Activated naive CD4-positive, alpha-beta T cell treated with anti-CD3 and anti-CD28 coated beads for 36 hours (primary cell): ENCODE measurements at regions of chr2 and their contacts with region 1.

Region 1: GRCh38 chr2:61176755-61177726 is 15.1 kb downstream of the C2orf74 start:
- DNase-seq: peak; percentile 94
- H3K4me3 Mint-ChIP-seq: peak overlapping the region; percentile 78
- H3K27ac Mint-ChIP-seq: peak overlapping the region; percentile 79
- H3K4me1 Mint-ChIP-seq: peaks cover 48% of the 10 kb centered on the region
- H3K27me3 Mint-ChIP-seq: no peaks in the 10 kb centered on the region

Region 2: DNA sequence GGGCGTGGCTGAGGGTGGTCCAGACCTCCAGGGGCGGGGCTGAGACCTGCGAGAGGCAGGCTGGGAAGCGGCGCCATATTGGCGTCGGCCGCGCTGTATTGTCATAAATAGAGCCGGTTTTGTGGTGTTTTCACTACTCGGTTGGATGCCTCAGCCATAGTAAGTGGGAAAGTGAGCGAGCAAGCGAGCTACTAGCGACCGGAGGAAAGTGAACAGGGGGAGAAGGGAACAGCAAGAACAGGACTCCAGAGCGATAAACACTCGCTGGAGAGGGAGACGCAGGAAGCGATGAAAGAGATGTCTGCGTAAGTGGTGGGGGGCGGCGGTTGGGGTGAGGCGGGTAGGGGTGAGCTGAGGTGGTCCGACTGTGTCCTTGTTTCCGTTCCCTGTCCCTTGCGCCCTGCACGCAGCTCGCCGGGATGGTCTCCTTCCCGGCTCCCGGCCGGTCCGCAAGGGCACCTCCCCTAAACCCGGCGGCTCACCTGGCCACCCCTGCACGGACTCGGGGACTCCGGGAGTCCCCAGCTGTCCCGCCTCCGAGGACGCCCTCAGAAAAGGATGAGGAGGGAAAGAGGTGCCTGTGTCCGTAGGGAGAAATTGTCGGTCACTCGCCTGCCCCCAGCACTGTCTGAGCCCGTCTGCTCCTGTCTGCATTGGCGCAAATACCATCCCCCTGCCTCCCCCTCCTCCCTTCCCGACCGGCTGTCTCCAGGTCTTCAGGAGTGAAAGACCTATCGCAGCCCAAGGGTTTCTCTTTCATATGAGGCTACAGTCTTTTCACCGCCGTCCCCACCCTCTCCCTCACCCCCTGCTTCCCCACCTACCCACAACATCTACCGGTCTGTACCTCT is 420.6 kb before region 1 on chr2 and contains the start of gene PAPOLG:
- CTCF ChIA-PET with region 1: no interaction called
- intact Hi-C with region 1: loop called (anchors 1 kb)
- DNase-seq: peak; percentile 99
- H3K4me3 Mint-ChIP-seq: peak within 1 kb of the TSS; percentile 99
- H3K27ac Mint-ChIP-seq: peak within 1 kb of the TSS; percentile 97
- H3K4me1 Mint-ChIP-seq: peaks cover 40% of the 10 kb centered on the region
- H3K27me3 Mint-ChIP-seq: no peaks in the 10 kb centered on the region
- total RNA-seq, gene PAPOLG: 14.1 to 16.1 TPM

Region 3: DNA sequence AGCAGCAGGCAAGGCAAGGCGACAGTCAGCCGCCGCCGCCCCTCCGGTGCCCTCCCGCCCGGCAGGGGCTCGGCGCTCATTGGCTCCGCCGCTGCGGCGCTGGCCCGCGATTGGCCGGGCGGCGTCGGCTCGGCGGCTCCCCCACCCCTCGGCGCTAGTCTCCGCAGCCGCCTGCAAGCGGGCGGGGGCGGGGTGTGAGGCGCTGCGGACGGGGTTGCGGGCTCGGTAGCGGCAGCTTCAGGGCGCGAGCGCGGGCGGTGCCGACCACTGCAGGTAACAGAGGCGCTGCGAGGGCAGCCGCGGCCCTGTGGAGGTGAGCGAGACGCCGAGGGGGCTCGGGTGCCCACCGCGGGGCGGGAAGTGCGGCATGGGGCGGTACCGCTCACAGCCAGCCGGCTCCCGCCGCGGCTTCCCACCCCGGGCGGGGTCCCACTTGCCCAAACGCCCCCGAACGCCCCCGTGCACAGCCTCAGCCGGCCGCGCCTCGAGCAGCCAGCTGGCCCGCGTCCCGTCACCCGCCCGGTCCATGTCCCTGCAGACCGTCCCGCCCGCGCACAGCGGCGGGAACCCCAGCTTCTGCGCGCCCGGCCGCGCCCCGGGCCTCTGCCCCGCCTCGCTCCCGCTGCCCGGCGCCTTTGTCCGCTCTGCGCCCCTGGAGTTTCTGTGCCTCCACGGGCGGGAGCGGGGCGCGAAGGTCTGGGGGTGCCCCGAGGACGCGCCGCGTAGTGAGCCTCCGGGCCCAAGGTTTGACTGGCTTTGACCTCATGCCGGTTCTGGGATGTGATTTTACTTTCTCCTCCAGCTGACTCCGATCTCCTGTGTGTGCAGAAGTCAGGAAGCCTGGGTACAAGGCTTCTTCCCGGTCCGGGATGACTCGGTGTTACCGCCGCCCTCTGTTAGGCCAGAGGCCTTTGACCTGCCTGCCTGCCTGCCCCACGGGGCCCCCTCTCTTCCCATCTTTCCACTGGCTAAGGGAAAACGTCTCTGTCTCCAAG is 111.0 kb before region 1 on chr2 and contains the start of gene SANBR:
- CTCF ChIA-PET with region 1: no interaction called
- intact Hi-C with region 1: loop called (anchors 1 kb)
- DNase-seq: peak; percentile 83
- H3K4me3 Mint-ChIP-seq: peak within 1 kb of the TSS; percentile 84
- H3K27ac Mint-ChIP-seq: no peak within 1 kb of the TSS
- H3K4me1 Mint-ChIP-seq: peaks cover 8% of the 10 kb centered on the region
- H3K27me3 Mint-ChIP-seq: no peaks in the 10 kb centered on the region
- total RNA-seq, gene SANBR: 1.9 to 2.1 TPM

Region 4: GRCh38 chr2:61658841-61659780 is 482.1 kb after region 1 on chr2:
- CTCF ChIA-PET with region 1: no interaction called
- intact Hi-C with region 1: loop called (anchors 2 kb)
- DNase-seq: no peak
- H3K4me3 Mint-ChIP-seq: no peak overlapping the region
- H3K27ac Mint-ChIP-seq: no peak overlapping the region
- H3K4me1 Mint-ChIP-seq: no peaks in the 10 kb centered on the region
- H3K27me3 Mint-ChIP-seq: no peaks in the 10 kb centered on the region

Region 5: DNA sequence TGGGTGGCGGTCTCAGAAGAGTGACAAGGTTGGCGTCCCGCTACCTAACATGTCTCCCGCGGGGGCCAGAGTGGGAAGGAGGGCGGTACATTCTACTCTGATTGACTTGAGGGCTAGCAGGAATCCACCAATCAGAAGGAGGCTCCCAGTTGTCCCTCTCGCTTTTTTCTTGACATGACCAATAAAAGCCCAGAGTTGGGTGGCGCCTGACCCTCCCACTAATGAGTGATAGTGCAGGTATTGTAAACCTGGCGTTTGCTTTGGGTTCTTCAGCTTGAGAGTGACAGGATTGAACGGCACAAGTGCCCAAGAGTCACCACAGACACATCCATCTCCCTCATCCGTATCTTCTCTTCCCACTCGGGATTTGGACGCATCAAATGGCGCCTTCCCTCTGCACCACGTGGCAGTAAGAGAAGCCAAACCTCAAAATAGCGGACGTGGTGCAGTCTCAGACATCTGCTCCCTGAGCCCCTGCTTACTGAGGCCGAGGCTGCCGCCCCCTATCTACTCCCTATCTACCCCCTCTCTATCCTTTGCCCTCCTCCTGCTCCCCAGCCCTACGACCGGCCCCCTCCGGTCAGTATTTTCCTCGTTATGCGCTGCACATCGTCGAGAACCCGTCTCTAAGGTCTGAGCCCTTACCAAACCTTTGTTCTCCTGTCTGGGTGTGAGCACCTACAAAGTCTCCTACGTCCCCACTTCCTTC is 677.6 kb after region 1 on chr2:
- CTCF ChIA-PET with region 1: no interaction called
- intact Hi-C with region 1: loop called (anchors 1 kb)
- DNase-seq: peak; percentile 95
- H3K4me3 Mint-ChIP-seq: peak overlapping the region; percentile 93
- H3K27ac Mint-ChIP-seq: peak overlapping the region; percentile 91
- H3K4me1 Mint-ChIP-seq: peaks cover 17% of the 10 kb centered on the region
- H3K27me3 Mint-ChIP-seq: no peaks in the 10 kb centered on the region

Region 6: GRCh38 chr2:62306751-62307468 is 1129.9 kb after region 1 on chr2:
- CTCF ChIA-PET with region 1: no interaction called
- intact Hi-C with region 1: loop called (anchors 5 kb)
- DNase-seq: peak; percentile 73
- H3K4me3 Mint-ChIP-seq: no peak overlapping the region
- H3K27ac Mint-ChIP-seq: peak overlapping the region; percentile 90
- H3K4me1 Mint-ChIP-seq: peaks cover 74% of the 10 kb centered on the region
- H3K27me3 Mint-ChIP-seq: no peaks in the 10 kb centered on the region